Endothelial cell of umbilical vein (primary cell): ENCODE measurements at regions of chr4 and their contacts with region 1.

Region 1: GRCh38 chr4:159206427-159206871 is 103.6 kb downstream of the RAPGEF2 start:
- DNase-seq: peak; percentile 73
- H3K4me3 ChIP-seq: no peak overlapping the region
- H3K27ac ChIP-seq: no peak overlapping the region
- H3K4me1 ChIP-seq: peaks cover 27% of the 10 kb centered on the region
- H3K27me3 ChIP-seq: no peaks in the 10 kb centered on the region
- CTCF ChIP-seq: no peak
- POLR2A ChIP-seq: no peak

Region 2: DNA sequence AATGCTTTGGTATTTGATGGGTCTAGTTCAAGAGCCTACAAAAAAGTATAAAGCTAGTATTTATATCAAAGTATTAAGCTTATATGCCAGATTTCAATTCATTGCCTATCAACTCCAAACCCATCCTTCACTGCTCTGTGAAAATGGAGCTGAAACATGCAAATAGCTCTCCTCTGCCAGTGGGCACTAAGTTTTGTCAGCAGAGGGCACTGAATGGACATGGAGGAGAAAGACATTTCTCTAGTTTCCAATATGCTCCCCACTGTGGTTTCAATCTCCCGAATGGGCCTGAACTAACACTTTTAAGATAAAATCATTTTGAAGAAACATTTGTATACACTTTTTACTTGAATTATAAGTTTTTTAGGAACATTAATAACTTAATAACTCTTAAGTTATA is 495.6 kb before region 1 on chr4:
- CTCF ChIA-PET with region 1: interaction called, 10 read pairs
- POLR2A ChIA-PET with region 1: no interaction called
- dilution Hi-C with region 1: no loop called
- intact Hi-C with region 1: no loop called
- DNase-seq: peak; percentile 31
- H3K4me3 ChIP-seq: no peak overlapping the region
- H3K27ac ChIP-seq: no peak overlapping the region
- H3K4me1 ChIP-seq: no peaks in the 10 kb centered on the region
- H3K27me3 ChIP-seq: no peaks in the 10 kb centered on the region
- CTCF ChIP-seq: peak; percentile 12 to 17
- POLR2A ChIP-seq: no peak

Region 3: DNA sequence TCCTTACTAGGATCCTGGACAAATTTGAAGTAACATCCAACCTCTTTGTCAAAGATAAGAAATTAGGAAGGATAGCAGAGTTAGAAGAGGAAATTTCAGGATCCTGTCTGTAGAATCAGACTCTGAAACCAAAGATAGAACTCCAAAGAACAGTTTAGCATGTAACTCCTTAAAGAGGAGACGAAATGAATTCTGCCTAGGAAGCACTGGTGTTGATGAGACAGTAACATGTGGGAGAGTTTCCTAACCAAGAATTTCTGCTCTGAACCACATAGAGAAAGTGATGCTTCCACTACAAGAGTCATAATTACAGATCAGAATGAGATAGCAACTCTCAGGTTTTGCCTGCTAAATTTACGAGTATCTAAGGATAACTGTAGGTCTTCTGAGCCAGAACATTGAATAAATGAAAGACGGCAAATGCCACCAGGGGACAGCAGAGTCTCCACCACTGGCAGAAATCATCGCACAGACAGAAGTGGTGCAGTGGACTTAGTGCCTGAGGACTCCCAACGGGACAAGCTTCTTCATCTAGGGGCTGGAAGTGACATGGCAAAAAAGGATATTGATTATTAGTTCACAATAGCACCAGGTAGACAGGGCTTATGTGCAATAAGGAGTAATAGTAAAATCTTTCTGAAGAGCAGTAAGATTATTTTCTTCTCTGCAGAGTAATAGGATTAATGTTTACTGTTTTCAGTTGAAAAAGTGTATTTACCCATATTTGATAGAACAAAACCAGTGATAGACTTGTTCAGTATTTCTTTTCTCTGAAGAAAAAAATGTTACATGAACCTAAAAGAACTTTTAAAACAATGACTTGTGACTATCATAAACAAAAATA is 476.5 kb before region 1 on chr4:
- CTCF ChIA-PET with region 1: interaction called, 9 read pairs
- POLR2A ChIA-PET with region 1: no interaction called
- dilution Hi-C with region 1: no loop called
- intact Hi-C with region 1: loop called (anchors 1 kb)
- DNase-seq: peak; percentile 84
- H3K4me3 ChIP-seq: no peak overlapping the region
- H3K27ac ChIP-seq: no peak overlapping the region
- H3K4me1 ChIP-seq: no peaks in the 10 kb centered on the region
- H3K27me3 ChIP-seq: peaks cover 9 to 14% of the 10 kb centered on the region in 2 experiments
- CTCF ChIP-seq: peak; percentile 71 to 78
- POLR2A ChIP-seq: no peak

Region 4: GRCh38 chr4:159980831-159981468 is 774.5 kb after region 1 on chr4:
- CTCF ChIA-PET with region 1: no interaction called
- POLR2A ChIA-PET with region 1: no interaction called
- dilution Hi-C with region 1: no loop called
- intact Hi-C with region 1: no loop called
- DNase-seq: no peak
- H3K4me3 ChIP-seq: no peak overlapping the region
- H3K27ac ChIP-seq: no peak overlapping the region
- H3K4me1 ChIP-seq: no peaks in the 10 kb centered on the region
- H3K27me3 ChIP-seq: no peaks in the 10 kb centered on the region
- CTCF ChIP-seq: no peak
- POLR2A ChIP-seq: no peak